Activated naive CD4-positive, alpha-beta T cell treated with anti-CD3 and anti-CD28 coated beads for 36 hours (primary cell): ENCODE measurements at regions of chr20 and their contacts with region 1.

Region 1: GRCh38 chr20:49823152-49823847 is 10.7 kb downstream of the SLC9A8 start:
- DNase-seq: no peak
- H3K4me3 Mint-ChIP-seq: peak overlapping the region; percentile 3
- H3K27ac Mint-ChIP-seq: peak overlapping the region; percentile 84
- H3K4me1 Mint-ChIP-seq: peaks cover 45% of the 10 kb centered on the region
- H3K27me3 Mint-ChIP-seq: no peaks in the 10 kb centered on the region

Region 2: GRCh38 chr20:49747707-49748524 is 75.4 kb before region 1 on chr20:
- CTCF ChIA-PET with region 1: no interaction called
- intact Hi-C with region 1: no loop called
- DNase-seq: peak; percentile 14
- H3K4me3 Mint-ChIP-seq: no peak overlapping the region
- H3K27ac Mint-ChIP-seq: no peak overlapping the region
- H3K4me1 Mint-ChIP-seq: peaks cover 5% of the 10 kb centered on the region
- H3K27me3 Mint-ChIP-seq: peaks cover 8% of the 10 kb centered on the region

Region 3: DNA sequence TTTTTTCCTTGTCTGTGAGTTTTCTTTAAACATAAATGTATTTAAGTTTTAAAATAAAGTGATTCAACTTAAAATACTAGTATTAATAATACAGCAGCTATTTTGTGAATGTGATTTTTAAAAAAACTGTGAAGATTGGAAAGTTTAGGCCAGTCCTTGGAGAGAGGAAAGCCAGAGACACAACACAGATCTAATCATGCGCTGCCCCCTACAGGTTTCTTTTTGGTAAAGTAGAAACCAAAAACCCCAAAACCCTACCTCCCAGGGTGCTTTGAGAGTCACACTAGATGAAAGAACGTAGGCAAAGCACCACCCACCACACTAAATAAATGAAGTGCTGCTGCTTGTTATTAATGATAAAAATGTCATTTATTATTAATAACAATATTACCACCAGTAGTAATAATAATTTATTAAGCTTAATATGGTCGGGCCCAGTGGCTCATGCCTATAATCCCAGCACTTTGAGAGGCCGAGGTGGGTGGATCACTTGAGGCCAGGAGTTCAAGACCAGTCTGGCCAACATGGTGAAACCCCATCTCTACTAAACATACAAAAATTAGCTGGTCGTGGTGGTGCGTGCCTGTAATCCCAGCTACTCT is 23.0 kb after region 1 on chr20:
- CTCF ChIA-PET with region 1: interaction called, 20 read pairs
- intact Hi-C with region 1: no loop called
- DNase-seq: peak; percentile 72
- H3K4me3 Mint-ChIP-seq: no peak overlapping the region
- H3K27ac Mint-ChIP-seq: no peak overlapping the region
- H3K4me1 Mint-ChIP-seq: peaks cover 3% of the 10 kb centered on the region
- H3K27me3 Mint-ChIP-seq: no peaks in the 10 kb centered on the region